Naive thymus-derived CD4-positive, alpha-beta T cell (primary cell): ENCODE measurements at regions of chr17 and their contacts with region 1.

Region 1: DNA sequence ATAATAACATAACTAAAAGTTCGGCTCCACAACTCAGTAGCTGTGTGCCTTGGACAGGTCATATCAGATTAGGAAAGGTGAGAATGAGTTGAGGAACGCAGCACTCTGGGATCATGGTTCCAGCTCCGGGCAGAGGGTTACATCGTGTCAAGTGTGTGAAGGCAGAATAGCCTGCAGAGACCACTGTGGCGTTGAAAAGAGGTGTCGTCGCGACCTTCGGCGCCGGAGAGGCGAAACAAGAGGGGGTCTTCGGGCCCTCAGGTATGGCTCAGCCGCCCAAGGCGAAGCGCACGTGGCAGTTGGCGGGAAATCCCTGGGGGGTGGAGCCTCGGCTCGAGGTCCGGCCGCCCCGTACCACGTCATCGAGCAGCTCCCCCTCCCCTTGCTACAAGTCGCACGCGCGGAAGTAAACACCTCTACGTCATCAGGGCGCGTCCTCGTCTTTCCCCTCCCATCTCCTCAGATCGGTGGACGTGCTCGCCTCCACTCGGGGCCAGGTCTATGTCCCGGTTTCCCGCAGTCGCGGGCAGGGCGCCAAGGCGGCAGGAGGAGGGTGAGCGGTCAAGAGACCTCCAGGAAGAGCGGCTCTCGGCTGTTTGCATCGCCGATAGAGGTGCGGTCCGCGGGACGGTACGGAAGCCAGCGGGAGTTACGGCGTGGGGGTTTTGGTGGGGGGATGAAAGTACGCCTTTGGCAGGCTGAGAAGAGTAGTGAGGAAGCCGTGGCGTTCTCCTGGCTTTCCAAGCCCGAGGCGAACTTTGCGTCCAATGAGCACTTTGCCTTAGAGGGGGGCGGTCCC is at the start of gene DHX40:
- DNase-seq: peak; percentile 80 to 95 (median 92)
- ATAC-seq: peak; percentile 97
- H3K4me3 ChIP-seq: peak within 1 kb of the TSS; percentile 92
- H3K4me3 Mint-ChIP-seq: peak within 1 kb of the TSS; percentile 97 to 100 (median 100)
- H3K27ac ChIP-seq: peak within 1 kb of the TSS; percentile 95
- H3K27ac Mint-ChIP-seq: peak within 1 kb of the TSS; percentile 98 to 100 (median 100)
- H3K4me1 ChIP-seq: peaks cover 10 to 14% of the 10 kb centered on the region in 2 donors
- H3K4me1 Mint-ChIP-seq: peaks cover 0 to 30% (median 23%) of the 10 kb centered on the region in 7 donors
- H3K27me3 ChIP-seq: no peaks in the 10 kb centered on the region
- H3K27me3 Mint-ChIP-seq: peaks cover 0 to 3% (median 0%) of the 10 kb centered on the region in 5 donors
- total RNA-seq, gene DHX40: 21.3 to 44.9 (median 29.4) TPM

Region 2: DNA sequence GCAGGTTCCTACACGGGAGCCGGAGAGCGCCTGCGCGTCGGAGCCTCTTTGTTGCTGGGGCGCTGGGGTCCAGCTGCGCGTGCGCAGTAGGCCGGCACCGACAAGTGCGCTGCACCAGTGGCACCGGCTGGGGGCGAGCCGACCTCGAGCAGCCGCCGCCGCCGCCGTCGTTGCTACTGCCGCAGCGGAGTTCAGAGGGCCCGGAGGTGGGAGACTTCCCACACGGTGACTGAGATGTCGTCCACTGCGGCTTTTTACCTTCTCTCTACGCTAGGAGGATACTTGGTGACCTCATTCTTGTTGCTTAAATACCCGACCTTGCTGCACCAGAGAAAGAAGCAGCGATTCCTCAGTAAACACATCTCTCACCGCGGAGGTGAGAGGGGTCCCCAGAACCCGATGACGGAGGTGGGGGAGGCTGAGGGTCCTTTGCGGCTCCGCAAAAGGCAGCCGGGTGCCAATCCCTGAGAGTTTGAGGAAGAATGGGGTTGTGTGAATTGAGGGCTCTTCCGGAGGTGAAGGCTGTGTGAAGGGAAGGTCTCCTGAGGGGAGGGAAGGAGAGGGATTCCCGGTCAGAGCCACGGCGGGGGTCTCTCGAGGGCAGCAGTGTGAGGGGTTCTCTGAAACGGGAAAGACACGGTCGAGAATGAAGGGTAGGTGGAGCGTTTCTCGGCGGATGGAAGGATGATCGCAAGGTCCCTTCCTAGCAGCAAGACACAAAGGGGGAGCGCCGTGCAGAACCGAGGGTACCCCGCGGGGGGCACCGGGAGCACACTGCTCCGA is 344.8 kb before region 1 on chr17 and contains the start of gene GDPD1:
- CTCF ChIA-PET with region 1: no interaction called
- POLR2A ChIA-PET with region 1: no interaction called
- intact Hi-C with region 1: loop called in 1 of 2 experiments (anchors 5 kb)
- DNase-seq: peak; percentile 95 to 98 (median 97)
- ATAC-seq: peak; percentile 100
- H3K4me3 ChIP-seq: peak within 1 kb of the TSS; percentile 99
- H3K4me3 Mint-ChIP-seq: peak within 1 kb of the TSS; percentile 94 to 100 (median 98)
- H3K27ac ChIP-seq: peak within 1 kb of the TSS; percentile 92
- H3K27ac Mint-ChIP-seq: peak within 1 kb of the TSS; percentile 94 to 100 (median 98)
- H3K4me1 ChIP-seq: peaks cover 5 to 9% of the 10 kb centered on the region in 2 donors
- H3K4me1 Mint-ChIP-seq: peaks cover 5 to 16% (median 14%) of the 10 kb centered on the region in 7 donors
- H3K27me3 ChIP-seq: no peaks in the 10 kb centered on the region
- H3K27me3 Mint-ChIP-seq: peaks cover 0 to 5% (median 0%) of the 10 kb centered on the region in 5 donors
- total RNA-seq, gene GDPD1: 2.4 to 6.0 (median 3.8) TPM

Region 3: GRCh38 chr17:59331129-59331928 is 234.0 kb before region 1 on chr17 and contains the start of gene YPEL2:
- CTCF ChIA-PET with region 1: no interaction called
- POLR2A ChIA-PET with region 1: no interaction called
- intact Hi-C with region 1: loop called (anchors 1 to 5 kb)
- DNase-seq: peak; percentile 77 to 92 (median 89)
- ATAC-seq: peak; percentile 96
- H3K4me3 ChIP-seq: peak within 1 kb of the TSS; percentile 67
- H3K4me3 Mint-ChIP-seq: peak within 1 kb of the TSS; percentile 89 to 96 (median 94)
- H3K27ac ChIP-seq: peak within 1 kb of the TSS; percentile 77
- H3K27ac Mint-ChIP-seq: peak within 1 kb of the TSS; percentile 77 to 98 (median 94)
- H3K4me1 ChIP-seq: peaks cover 30 to 55% of the 10 kb centered on the region in 2 donors
- H3K4me1 Mint-ChIP-seq: peaks cover 53 to 85% (median 79%) of the 10 kb centered on the region in 7 donors
- H3K27me3 ChIP-seq: no peaks in the 10 kb centered on the region
- H3K27me3 Mint-ChIP-seq: peaks cover 0 to 11% (median 0%) of the 10 kb centered on the region in 5 donors
- total RNA-seq, gene YPEL2: 10.6 to 52.0 (median 46.8) TPM

Region 4: DNA sequence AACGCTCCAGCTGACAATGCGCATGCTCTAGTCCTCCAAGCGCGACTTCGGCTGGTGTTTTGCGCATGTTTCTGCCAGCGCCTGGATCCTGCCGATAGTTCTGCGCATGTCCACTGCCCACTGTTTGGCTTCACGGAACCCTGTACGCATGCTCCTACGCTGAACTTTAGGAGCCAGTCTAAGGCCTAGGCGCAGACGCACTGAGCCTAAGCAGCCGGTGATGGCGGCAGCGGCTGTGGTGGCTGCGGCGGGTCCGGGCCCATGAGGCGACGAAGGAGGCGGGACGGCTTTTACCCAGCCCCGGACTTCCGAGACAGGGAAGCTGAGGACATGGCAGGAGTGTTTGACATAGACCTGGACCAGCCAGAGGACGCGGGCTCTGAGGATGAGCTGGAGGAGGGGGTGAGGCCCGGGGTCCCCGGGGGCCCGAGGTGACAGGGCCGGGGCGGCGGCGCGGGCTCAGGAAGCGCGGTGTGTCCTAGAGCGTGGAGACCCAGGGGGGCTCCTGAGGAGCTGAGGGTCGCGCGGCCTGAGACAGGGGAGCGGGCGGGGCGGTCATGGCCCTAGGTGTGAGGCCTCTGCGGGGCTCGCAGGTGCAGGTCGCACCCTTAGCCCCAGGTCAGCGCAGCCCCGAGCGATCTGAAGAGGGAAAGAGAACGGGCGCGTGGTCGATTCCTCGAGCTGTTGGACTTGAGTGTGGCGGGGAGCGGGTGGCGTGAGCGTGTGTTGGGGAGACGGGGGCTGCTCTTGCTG is 327.7 kb after region 1 on chr17 and contains the starts of genes RPS6KB1 and TUBD1:
- CTCF ChIA-PET with region 1: no interaction called
- POLR2A ChIA-PET with region 1: no interaction called
- intact Hi-C with region 1: loop called in 1 of 2 experiments (anchors 2 kb)
- DNase-seq: peak; percentile 87 to 99 (median 98)
- ATAC-seq: peak; percentile 96
- H3K4me3 ChIP-seq: peak within 1 kb of the TSS; percentile 74
- H3K4me3 Mint-ChIP-seq: peak within 1 kb of the TSS; percentile 97 to 100 (median 99)
- H3K27ac ChIP-seq: peak within 1 kb of the TSS; percentile 93
- H3K27ac Mint-ChIP-seq: peak within 1 kb of the TSS; percentile 98 to 100 (median 100)
- H3K4me1 ChIP-seq: peaks cover 13 to 23% of the 10 kb centered on the region in 2 donors
- H3K4me1 Mint-ChIP-seq: peaks cover 43 to 83% (median 67%) of the 10 kb centered on the region in 7 donors
- H3K27me3 ChIP-seq: no peaks in the 10 kb centered on the region
- H3K27me3 Mint-ChIP-seq: peaks cover 0 to 4% (median 0%) of the 10 kb centered on the region in 5 donors
- total RNA-seq, gene RPS6KB1: 62.0 to 107 (median 71.5) TPM
- total RNA-seq, gene TUBD1: 8.2 to 42.1 (median 14.3) TPM

Region 5: DNA sequence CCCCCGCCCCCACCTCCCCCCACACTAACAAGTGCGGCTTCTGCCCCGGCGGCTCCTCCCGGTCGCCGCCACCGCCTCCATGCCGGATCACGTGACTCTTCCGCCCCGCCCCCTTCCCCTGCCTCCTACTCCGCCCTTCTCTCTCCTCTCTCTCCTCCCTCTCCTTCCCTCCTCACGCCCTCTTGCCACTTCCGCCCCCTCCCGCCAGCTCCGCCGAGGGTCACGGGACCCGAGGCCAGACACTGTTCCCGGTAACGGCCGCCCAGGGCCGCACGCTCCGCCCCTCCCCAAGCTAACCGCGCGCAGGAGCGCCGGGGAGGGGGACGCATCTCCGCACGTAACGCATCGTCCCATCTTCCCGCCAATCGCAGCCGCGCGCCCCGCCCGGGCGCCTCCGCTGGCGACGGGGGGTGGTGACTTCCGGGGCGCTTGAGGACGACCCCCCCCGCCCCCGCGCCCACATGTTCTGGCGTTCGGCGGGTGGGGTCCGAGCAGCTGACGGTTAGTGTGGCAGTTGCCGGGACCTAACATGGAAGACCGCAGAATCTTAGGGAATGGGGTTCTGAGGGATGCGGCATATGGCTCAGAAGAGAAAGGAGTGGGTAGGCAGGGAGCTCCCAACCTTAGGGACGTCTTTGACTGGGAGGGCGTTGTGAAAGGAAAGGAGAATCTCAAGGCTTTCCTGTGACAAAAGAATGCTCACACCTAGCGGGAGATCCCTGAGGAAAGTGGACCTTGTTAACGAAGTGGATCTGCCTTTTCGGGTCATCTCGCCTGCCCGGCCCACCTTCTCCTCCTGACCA is 826.9 kb after region 1 on chr17 and contains the start of gene USP32:
- CTCF ChIA-PET with region 1: no interaction called
- POLR2A ChIA-PET with region 1: no interaction called
- intact Hi-C with region 1: loop called in 1 of 2 experiments (anchors 10 kb)
- DNase-seq: peak; percentile 94 to 98 (median 96)
- ATAC-seq: peak; percentile 95
- H3K4me3 ChIP-seq: peak within 1 kb of the TSS; percentile 97
- H3K4me3 Mint-ChIP-seq: peak within 1 kb of the TSS; percentile 93 to 99 (median 96)
- H3K27ac ChIP-seq: peak within 1 kb of the TSS; percentile 92
- H3K27ac Mint-ChIP-seq: peak within 1 kb of the TSS; percentile 92 to 99 (median 97)
- H3K4me1 ChIP-seq: peaks cover 5 to 18% of the 10 kb centered on the region in 2 donors
- H3K4me1 Mint-ChIP-seq: peaks cover 30 to 55% (median 41%) of the 10 kb centered on the region in 7 donors
- H3K27me3 ChIP-seq: no peaks in the 10 kb centered on the region
- H3K27me3 Mint-ChIP-seq: no peaks in the 10 kb centered on the region
- total RNA-seq, gene USP32: 31.6 to 58.1 (median 35.4) TPM